Mammary epithelial cell (primary cell): ENCODE measurements at regions of chr15 and their contacts with region 1.

Region 1: DNA sequence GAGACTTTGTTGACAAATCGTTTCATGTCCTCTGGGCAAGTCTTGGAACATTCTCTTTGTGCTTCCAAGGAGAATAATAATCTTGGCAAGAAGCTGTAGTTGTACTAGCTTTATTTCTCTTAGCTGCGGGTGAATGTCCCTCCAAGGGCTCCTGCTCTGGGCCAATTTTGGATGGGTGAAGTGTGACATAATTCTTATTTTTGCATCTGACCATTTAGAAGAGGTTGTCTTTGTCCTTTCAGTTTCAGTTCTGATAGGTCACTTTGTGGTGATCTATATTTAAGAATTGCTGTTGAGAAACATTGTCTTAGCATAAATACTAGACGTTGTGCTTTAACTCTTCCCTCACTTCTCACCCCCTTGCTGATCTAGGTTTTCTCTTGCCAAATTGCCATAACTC is 164.8 kb upstream of the RORA start:
- DNase-seq: no peak
- H3K4me3 ChIP-seq: no peak overlapping the region
- H3K27ac ChIP-seq: no peak overlapping the region
- H3K4me1 ChIP-seq: no peaks in the 10 kb centered on the region
- H3K27me3 ChIP-seq: no peaks in the 10 kb centered on the region
- CTCF ChIP-seq: no peak

Region 2: GRCh38 chr15:61411902-61412510 is 18.1 kb after region 1 on chr15:
- CTCF ChIA-PET with region 1: no interaction called
- dilution Hi-C with region 1: no loop called
- in situ Hi-C with region 1: no loop called
- intact Hi-C with region 1: loop called (anchors 1 kb)
- DNase-seq: no peak
- H3K4me3 ChIP-seq: no peak overlapping the region
- H3K27ac ChIP-seq: no peak overlapping the region
- H3K4me1 ChIP-seq: no peaks in the 10 kb centered on the region
- H3K27me3 ChIP-seq: no peaks in the 10 kb centered on the region
- CTCF ChIP-seq: no peak

Region 3: GRCh38 chr15:61459785-61460707 is 66.1 kb after region 1 on chr15:
- CTCF ChIA-PET with region 1: no interaction called
- dilution Hi-C with region 1: no loop called
- in situ Hi-C with region 1: no loop called
- intact Hi-C with region 1: no loop called
- DNase-seq: peak; percentile 46
- H3K4me3 ChIP-seq: no peak overlapping the region
- H3K27ac ChIP-seq: no peak overlapping the region
- H3K4me1 ChIP-seq: peaks cover 9% of the 10 kb centered on the region
- H3K27me3 ChIP-seq: no peaks in the 10 kb centered on the region
- CTCF ChIP-seq: no peak

Region 4: DNA sequence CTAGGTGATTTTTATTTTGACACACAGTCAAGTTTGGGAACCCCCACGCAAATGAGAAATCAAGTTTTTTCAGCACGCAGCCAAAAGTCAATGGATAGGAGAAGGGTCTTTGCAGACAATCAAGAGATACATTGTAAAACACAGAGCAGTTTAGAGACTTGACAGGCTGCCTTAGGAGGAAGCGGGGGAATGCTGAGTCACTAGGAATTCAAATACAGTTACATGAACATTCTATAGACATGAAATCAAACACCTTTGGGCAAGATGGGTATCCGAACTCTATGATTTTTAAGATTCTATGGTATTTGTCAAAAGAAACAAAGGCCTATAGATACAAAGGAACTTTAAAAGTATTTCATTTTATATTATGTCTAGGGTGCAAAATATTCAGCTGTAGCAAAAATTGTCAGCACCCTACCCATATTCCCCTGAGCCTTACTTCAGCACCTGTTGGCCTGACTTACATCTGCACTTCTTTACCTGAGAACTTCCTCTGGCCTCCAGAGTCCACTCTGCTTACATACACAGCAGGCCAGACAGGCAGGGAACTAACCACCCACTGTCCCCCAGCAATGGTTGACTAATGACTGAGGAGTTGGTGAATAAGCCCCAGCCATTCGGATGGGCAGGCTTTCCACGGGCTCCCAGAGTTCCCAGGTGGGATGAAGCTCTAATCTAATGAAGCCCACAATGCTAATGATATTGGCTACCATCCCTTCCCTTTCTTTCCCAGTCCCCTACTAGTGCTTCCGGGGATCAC is 124.4 kb after region 1 on chr15:
- CTCF ChIA-PET with region 1: no interaction called
- dilution Hi-C with region 1: no loop called
- in situ Hi-C with region 1: no loop called
- intact Hi-C with region 1: no loop called
- DNase-seq: peak; percentile 20
- H3K4me3 ChIP-seq: no peak overlapping the region
- H3K27ac ChIP-seq: no peak overlapping the region
- H3K4me1 ChIP-seq: peaks cover 7% of the 10 kb centered on the region
- H3K27me3 ChIP-seq: no peaks in the 10 kb centered on the region
- CTCF ChIP-seq: no peak